A549 (cell line): ENCODE measurements at regions of chr19 and their contacts with region 1.

Region 1: DNA sequence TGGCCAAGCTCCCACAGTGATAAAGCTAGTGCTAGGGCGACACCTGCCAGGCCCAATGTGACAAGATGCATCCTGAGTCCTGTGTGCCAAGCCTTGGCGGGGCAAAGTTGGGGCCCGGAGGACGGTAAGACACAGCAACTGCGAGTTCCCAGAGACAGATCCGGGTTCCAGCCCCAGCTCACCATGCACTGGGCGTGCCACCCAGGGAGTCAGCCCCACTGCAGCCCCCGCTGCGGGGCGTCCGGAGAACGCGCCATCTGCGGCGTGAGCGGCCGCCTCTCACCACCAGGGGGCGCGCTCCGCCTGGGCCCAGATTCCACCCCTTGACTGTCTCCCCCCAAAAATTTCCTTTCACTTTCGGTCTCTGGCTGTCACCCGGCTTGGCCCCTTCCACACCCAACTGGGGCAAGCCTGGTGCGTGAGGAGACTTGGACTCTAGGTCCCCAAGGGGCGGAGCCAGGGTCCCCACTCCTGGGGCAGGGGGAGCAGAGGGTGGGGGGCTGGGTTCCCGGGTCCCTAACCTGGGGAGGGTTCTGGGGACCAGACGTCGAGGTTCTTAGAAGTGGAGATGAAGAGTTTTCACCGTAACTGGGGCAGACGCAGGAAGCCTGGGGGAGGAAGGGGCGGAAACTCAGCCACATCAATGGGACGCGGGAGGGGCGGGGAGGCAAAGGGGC is at the start of gene FLT3LG:
- DNase-seq: peak; percentile 61 to 90
- ATAC-seq: peak; percentile 59 to 71
- H3K4me3 ChIP-seq: peak within 1 kb of the TSS; percentile 59
- H3K27ac ChIP-seq: peak within 1 kb of the TSS; percentile 77 to 91
- H3K4me1 ChIP-seq: peaks cover 21% of the 10 kb centered on the region
- CTCF ChIP-seq: peak; percentile 99
- EP300 ChIP-seq: no peak
- POLR2A ChIP-seq: no peak
- RAD21 ChIP-seq: peak; percentile 36 to 59
- polyA plus RNA-seq, gene FLT3LG: 0.42 and 0.58 TPM in 2 replicates

Region 2: GRCh38 chr19:49451430-49452181 is 22.4 kb before region 1 on chr19 and contains the start of gene PIH1D1:
- CTCF ChIA-PET with region 1: interaction called, 97 read pairs
- POLR2A ChIA-PET with region 1: interaction called, 11 read pairs
- DNase-seq: peak; percentile 99 to 100
- ATAC-seq: peak; percentile 76 to 79
- H3K4me3 ChIP-seq: peak within 1 kb of the TSS; percentile 90
- H3K27ac ChIP-seq: peak within 1 kb of the TSS; percentile 93 to 99
- H3K4me1 ChIP-seq: peaks cover 25% of the 10 kb centered on the region
- CTCF ChIP-seq: no peak
- EP300 ChIP-seq: no peak
- POLR2A ChIP-seq: peak; percentile 85
- RAD21 ChIP-seq: no peak
- polyA plus RNA-seq, gene PIH1D1: 74.1 and 89.7 TPM in 2 replicates

Region 3: GRCh38 chr19:49458567-49458903 is 15.5 kb before region 1 on chr19:
- CTCF ChIA-PET with region 1: interaction called, 97 read pairs
- POLR2A ChIA-PET with region 1: interaction called, 11 read pairs
- DNase-seq: no peak
- ATAC-seq: no peak
- H3K4me3 ChIP-seq: no peak overlapping the region
- H3K27ac ChIP-seq: no peak overlapping the region
- H3K4me1 ChIP-seq: peaks cover 16% of the 10 kb centered on the region
- CTCF ChIP-seq: no peak
- EP300 ChIP-seq: no peak
- POLR2A ChIP-seq: no peak
- RAD21 ChIP-seq: no peak

Region 4: GRCh38 chr19:49487277-49488045 is 13.5 kb after region 1 on chr19 and contains the start of gene RPL13A:
- CTCF ChIA-PET with region 1: interaction called, 25 read pairs
- POLR2A ChIA-PET with region 1: interaction called, 12 read pairs
- DNase-seq: peak; percentile 98 to 100
- ATAC-seq: peak; percentile 83 to 90
- H3K4me3 ChIP-seq: peak within 1 kb of the TSS; percentile 71
- H3K27ac ChIP-seq: peak within 1 kb of the TSS; percentile 94 to 95
- H3K4me1 ChIP-seq: peaks cover 29% of the 10 kb centered on the region
- CTCF ChIP-seq: no peak
- EP300 ChIP-seq: no peak
- POLR2A ChIP-seq: peak; percentile 97
- RAD21 ChIP-seq: no peak
- polyA plus RNA-seq, gene RPL13A: 5,391 and 5,410 TPM in 2 replicates

Region 5: DNA sequence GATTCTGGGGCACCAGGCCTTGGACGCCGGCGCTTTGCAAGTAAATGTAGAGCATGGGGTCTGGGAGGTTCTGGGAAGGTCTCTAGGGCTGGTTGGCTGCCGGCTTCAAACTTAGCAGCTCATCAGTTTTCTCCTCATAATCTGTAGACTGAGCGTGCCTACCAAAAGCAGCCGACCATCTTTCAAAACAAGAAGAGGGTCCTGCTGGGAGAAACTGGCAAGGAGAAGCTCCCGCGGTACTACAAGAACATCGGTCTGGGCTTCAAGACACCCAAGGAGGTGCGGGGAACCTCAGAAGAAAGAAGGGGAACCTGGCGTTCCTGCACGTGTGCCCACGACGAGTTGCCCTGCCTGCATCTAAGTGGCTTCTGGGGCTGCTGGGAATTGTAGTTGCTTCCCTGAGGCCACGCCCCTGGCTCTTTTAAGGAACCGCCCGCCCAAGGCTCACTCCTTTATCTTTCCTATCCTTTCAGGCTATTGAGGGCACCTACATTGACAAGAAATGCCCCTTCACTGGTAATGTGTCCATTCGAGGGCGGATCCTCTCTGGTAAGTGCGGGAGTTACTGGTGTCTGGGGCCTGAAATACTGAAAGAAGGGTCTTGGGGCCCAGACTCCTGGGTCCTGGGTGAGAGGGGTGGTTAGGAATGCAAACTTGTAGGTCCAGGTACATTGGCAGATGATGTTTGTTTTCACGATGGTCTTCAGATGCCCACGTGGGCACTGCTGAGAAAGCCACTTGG is 23.2 kb after region 1 on chr19:
- CTCF ChIA-PET with region 1: interaction called, 8 read pairs
- POLR2A ChIA-PET with region 1: interaction called, 12 read pairs
- DNase-seq: peak; percentile 77 to 79
- ATAC-seq: peak in 1 of 2 experiments; percentile 7; a peak in 2 of 6 replicates
- H3K4me3 ChIP-seq: peak overlapping the region; percentile 97
- H3K27ac ChIP-seq: peak overlapping the region; percentile 93 to 97
- H3K4me1 ChIP-seq: peaks cover 34% of the 10 kb centered on the region
- CTCF ChIP-seq: no peak
- EP300 ChIP-seq: no peak
- POLR2A ChIP-seq: peak; percentile 64
- RAD21 ChIP-seq: no peak